Aorta (tissue), 5 donors: ENCODE measurements at regions of chr4 and their contacts with region 1.

Region 1: GRCh38 chr4:22410645-22411247 is 105.1 kb downstream of the ADGRA3 start:
- DNase-seq: no peak
- ATAC-seq: no peak
- H3K4me3 ChIP-seq: no peak overlapping the region
- H3K27ac ChIP-seq: no peak overlapping the region
- H3K4me1 ChIP-seq: no peaks in the 10 kb centered on the region
- H3K27me3 ChIP-seq: no peaks in the 10 kb centered on the region

Region 2: DNA sequence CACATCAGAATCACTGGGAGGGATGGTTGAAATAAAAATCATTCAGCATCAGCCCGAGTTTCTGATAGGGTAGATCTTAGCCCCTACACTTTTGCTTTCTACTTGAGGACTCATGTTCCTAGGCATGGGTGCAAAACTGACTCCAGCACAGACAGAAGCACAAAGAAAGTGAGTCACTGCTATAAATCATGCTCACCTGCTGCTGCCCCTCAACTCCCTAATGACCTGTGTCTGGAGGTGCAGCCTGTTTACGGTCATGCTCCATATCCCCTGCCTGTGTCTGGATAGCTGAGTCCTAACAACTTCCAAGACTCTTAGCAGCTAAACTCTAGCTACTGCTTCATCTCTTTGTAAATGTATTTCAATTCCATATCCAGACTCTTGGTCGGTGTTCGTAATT is 47.4 kb after region 1 on chr4:
- intact Hi-C with region 1: no loop called
- DNase-seq: no peak
- ATAC-seq: no peak
- H3K4me3 ChIP-seq: no peak overlapping the region
- H3K27ac ChIP-seq: no peak overlapping the region
- H3K4me1 ChIP-seq: no peaks in the 10 kb centered on the region
- H3K27me3 ChIP-seq: no peaks in the 10 kb centered on the region

Region 3: GRCh38 chr4:22500831-22501719 is 90.3 kb after region 1 on chr4:
- intact Hi-C with region 1: no loop called
- DNase-seq: no peak
- ATAC-seq: no peak
- H3K4me3 ChIP-seq: no peak overlapping the region
- H3K27ac ChIP-seq: no peak overlapping the region
- H3K4me1 ChIP-seq: peaks cover 0 to 2% of the 10 kb centered on the region in 2 donors
- H3K27me3 ChIP-seq: no peaks in the 10 kb centered on the region

Region 4: GRCh38 chr4:22607382-22607781 is 196.6 kb after region 1 on chr4:
- intact Hi-C with region 1: loop called (anchors 5 to 10 kb)
- DNase-seq: peak in 1 of 2 donors; percentile 58
- ATAC-seq: peak; percentile 71
- H3K4me3 ChIP-seq: no peak overlapping the region
- H3K27ac ChIP-seq: no peak overlapping the region
- H3K4me1 ChIP-seq: no peaks in the 10 kb centered on the region
- H3K27me3 ChIP-seq: no peaks in the 10 kb centered on the region

Region 5: GRCh38 chr4:22688236-22688635 is 277.5 kb after region 1 on chr4:
- intact Hi-C with region 1: loop called (anchors 2 kb)
- DNase-seq: no peak
- ATAC-seq: no peak
- H3K4me3 ChIP-seq: no peak overlapping the region
- H3K27ac ChIP-seq: no peak overlapping the region
- H3K4me1 ChIP-seq: peaks cover 0 to 2% of the 10 kb centered on the region in 2 donors
- H3K27me3 ChIP-seq: no peaks in the 10 kb centered on the region